Ovary (tissue), 10 donors: ENCODE measurements at regions of chrX and their contacts with region 1.

Region 1: DNA sequence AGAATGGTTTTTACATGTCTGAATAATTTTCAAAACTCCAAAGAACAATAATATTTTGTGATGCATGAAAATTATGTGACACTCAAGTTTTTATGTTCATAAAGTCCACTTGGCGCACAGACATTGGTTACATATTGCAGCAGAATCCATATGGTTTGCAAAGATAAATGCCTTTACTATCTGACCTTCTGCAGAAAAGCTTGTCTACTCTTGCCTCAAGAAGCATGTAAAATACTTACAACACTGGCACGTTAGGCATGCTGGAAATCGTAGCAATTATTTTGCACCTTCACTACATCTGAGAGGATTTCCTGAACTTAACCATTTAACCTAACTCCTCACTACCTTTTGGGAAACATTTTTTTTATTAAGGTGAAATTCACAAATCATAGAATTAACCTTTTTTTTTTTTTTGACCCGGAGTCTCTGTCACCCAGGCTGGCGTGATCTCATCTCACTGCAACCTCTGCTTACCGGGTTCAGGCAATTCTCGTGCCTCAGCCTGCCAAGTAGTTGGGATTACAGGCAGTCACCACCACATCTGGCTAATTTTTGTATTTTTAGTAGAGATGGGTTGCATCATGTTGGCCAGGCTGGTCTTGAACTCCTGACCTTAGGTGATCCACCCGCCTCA is 3.5 kb upstream of the XG start:
- DNase-seq: no peak
- H3K4me3 ChIP-seq: no peak overlapping the region
- H3K27ac ChIP-seq: no peak overlapping the region
- H3K4me1 ChIP-seq: peaks cover 2% of the 10 kb centered on the region
- H3K27me3 ChIP-seq: no peaks in the 10 kb centered on the region
- CTCF ChIP-seq: no peak
- EP300 ChIP-seq: no peak
- POLR2A ChIP-seq: no peak

Region 2: DNA sequence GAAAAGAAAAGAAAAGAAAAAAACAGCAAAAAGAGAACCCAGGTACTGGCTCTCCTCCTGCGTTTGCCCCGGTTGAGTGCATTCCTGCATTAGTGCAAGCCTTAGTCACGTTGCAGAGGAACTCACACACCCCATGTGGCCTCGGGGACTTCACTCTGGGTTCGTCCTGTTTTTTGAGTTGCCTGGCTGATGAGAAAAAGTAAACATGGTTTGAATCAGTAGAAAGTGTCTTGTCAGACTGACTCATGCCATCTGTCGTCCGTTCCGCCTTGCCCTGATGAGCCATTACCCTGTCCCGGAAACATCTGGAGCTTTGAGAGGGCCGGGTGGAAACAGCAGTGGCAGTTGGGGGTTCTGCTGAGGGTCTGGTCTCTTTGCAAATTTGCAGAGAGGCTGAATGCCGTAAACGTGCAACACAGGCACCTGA is 41.0 kb before region 1 on chrX:
- intact Hi-C with region 1: loop called in 1 of 4 experiments (anchors 2 kb)
- DNase-seq: peak in 1 of 5 donors; percentile 11
- H3K4me3 ChIP-seq: no peak overlapping the region
- H3K27ac ChIP-seq: no peak overlapping the region
- H3K4me1 ChIP-seq: peaks cover 27% of the 10 kb centered on the region
- H3K27me3 ChIP-seq: no peaks in the 10 kb centered on the region
- CTCF ChIP-seq: no peak
- EP300 ChIP-seq: no peak
- POLR2A ChIP-seq: no peak